AG04450 (cell line): ENCODE measurements at regions of chr6 and their contacts with region 1.

Region 1: DNA sequence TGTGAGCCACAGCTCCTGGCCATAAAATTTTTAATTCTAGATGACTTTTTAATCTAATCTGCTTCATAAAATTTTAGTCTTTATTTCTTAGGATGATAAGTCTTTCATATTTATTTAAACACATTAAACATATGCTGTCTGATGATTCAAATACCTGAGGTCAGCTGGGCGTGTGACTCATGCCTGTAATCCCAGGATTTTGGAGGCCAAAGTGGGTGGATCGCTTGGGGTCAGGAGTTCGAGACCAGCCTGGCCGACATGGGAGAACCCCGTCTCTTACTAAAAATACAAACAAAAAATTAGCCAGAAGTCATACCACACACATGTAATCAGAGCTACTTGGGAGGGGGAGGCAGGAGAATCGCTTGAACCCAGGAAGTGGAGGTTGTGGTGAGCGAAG is 53.1 kb downstream of the RBM24 start:
- DNase-seq: no peak
- H3K4me3 ChIP-seq: no peak overlapping the region
- H3K27ac ChIP-seq: no peak overlapping the region
- H3K27me3 ChIP-seq: no peaks in the 10 kb centered on the region
- CTCF ChIP-seq: no peak

Region 2: GRCh38 chr6:17156112-17156921 is 177.9 kb before region 1 on chr6:
- CTCF ChIA-PET with region 1: no interaction called
- POLR2A ChIA-PET with region 1: interaction called, 10 read pairs
- DNase-seq: peak; percentile 69
- H3K4me3 ChIP-seq: no peak overlapping the region
- H3K27ac ChIP-seq: no peak overlapping the region
- H3K27me3 ChIP-seq: peaks cover 2% of the 10 kb centered on the region
- CTCF ChIP-seq: peak; percentile 74